ENCODE measurements at regions of chr9 and their contacts with region 1.

Region 1: GRCh38 chr9:1599961-1600360 is 415.2 kb upstream of the SMARCA2 start:
- DNase-seq: no peak
- CTCF ChIP-seq: no peak

Region 2: GRCh38 chr9:1460143-1460769 is 139.7 kb before region 1 on chr9:
- in situ Hi-C with region 1: loop called (anchors 10 kb)
- DNase-seq: peak; percentile 21
- CTCF ChIP-seq: peak; percentile 65

Region 3: DNA sequence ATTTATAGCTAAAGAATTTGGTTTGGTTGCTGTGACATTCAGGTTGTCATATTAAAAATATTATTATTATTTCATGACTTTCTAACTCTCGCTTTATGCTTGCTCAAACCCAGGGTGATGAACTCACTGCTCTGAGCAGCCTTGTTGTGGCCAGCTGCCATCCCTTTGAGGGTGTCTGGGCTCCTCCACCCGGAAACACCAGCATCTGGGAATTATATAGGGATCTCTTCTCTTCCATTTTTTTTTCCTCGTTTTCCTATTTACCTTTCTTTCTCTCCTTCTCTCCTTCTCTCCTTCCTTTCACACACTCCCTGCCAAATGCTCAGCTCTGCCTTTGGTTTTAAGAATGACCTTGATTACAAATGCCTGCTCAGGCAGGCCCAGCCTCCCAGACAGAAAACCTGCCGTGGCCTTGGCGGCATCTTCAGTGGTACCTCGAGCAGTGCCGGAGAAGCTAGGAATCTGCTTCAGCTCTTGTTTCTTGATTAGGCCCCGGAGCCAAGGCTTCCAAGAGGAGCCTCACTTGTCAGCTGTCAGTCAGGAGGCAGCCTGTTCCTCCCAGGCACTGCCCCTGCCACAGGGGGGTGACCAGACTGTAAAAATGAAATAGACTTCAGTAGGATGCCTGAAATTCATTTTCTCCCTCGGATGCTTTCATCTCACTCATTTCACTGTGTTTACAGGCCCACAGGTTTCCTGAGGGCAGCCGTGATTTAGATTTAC is 59.6 kb after region 1 on chr9:
- in situ Hi-C with region 1: no loop called
- DNase-seq: no peak
- CTCF ChIP-seq: no peak

Measured in GM13976 (cell line).